Sciatic nerve (tissue), 2 donors: ENCODE measurements at regions of chr19 and their contacts with region 1.

Region 1: GRCh38 chr19:16185123-16185767 is at the start of gene FAM32A:
- DNase-seq: peak; percentile 99
- ATAC-seq: peak; percentile 99
- total RNA-seq, gene FAM32A: 44.8 TPM

Region 2: DNA sequence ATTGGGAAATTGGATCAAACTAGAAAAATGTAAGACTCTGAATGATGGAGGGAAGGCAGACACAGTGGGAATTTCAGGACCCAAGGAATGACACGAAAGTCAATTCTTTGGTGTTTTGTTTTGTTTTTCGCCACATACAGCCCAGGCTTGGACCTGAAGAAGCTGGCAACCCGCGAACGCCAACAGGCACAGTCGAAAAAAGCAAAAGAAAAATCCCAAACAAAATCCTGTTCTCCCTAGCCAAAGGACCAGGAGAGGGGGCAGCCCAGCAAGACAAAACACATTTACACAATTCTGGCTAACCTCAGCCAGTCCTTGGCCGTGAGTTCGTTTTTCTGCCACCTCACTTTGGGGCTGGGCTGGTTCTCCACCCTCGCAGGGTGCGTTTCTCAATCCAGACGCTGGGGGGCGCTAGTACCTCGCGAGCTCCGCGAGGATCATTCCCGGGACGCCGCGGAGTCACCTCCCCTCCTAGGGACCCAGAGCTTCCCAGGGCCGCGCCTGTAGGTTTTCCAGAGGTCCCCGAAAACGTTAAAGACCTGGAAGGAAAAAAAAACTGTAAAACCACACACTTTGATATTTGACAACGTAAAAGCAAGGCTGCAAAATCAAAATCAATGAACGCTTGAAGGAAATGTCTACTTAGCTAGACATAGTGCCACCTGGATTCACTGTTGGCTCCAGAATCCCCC is 143.8 kb before region 1 on chr19:
- intact Hi-C with region 1: loop called (anchors 2 kb)
- DNase-seq: peak; percentile 93
- ATAC-seq: peak; percentile 95

Region 3: GRCh38 chr19:16111160-16111908 is 73.9 kb before region 1 on chr19 and contains the start of gene RAB8A:
- intact Hi-C with region 1: loop called (anchors 5 kb)
- DNase-seq: peak; percentile 99
- ATAC-seq: peak; percentile 98
- total RNA-seq, gene RAB8A: 49.6 TPM

Region 4: DNA sequence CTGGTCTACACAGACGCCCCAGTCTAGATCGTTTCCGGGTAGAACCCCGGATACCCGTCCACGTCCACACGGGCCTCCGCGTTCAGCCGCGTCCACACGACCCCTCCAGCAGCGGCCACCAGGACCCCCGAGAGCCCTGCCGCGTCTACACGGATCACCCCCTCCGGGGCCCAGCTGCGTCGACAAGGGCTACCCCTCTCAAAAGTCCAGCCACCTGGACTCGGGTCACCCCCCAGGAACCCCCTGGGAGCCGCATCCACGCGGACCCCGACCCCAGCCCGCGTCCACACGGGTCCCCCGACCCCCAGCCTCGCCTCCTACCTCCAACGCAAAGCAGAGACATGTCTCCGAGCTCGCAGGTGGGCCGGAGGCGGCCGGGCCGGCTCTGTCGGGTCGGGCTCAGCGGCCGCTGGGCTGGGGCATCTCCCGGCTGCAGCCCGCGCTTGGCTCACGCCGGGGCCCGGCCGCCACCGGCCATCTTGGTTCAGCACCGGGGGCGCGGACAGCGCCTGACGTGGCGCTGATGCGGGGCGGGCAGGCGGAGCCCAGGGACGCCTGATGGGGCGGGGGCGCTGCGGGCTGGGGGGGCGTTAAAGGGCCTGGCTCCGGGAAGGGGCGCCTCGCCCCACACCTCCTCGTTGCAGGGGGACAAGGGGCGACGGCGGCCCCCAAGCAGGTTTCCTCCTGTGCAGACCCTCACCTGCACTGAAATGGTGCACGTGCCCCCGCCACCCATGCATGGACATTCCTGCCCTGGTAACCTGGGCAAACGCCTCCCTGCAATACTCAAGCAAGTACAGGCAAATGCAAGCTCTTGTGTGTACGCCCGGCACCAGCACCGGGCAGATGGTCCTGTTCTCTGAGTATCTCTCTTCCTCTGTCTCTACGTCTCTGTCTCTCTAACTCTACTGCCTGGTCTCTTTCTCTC is 1502.9 kb after region 1 on chr19 and contains the start of gene UNC13A:
- intact Hi-C with region 1: no loop called
- DNase-seq: no peak
- ATAC-seq: peak; percentile 30
- total RNA-seq, gene UNC13A: 0.13 TPM